Right lobe of liver (tissue), 6 donors: ENCODE measurements at regions of chr5 and their contacts with region 1.

Region 1: GRCh38 chr5:141040771-141041426 is 10.3 kb upstream of the PCDHB1 start:
- DNase-seq: peak; percentile 85 to 91 (median 89)
- ATAC-seq: peak; percentile 98 to 99 (median 99)
- H3K4me3 ChIP-seq: peak overlapping the region; percentile 0 to 36 (median 29)
- H3K27ac ChIP-seq: peak overlapping the region in 1 of 3 donors; percentile 12
- H3K4me1 ChIP-seq: no peaks in the 10 kb centered on the region
- H3K27me3 ChIP-seq: peaks cover 7 to 11% of the 10 kb centered on the region in 2 donors
- CTCF ChIP-seq: peak; percentile 62 to 83 (median 70)
- POLR2A ChIP-seq: peak; percentile 79

Region 2: DNA sequence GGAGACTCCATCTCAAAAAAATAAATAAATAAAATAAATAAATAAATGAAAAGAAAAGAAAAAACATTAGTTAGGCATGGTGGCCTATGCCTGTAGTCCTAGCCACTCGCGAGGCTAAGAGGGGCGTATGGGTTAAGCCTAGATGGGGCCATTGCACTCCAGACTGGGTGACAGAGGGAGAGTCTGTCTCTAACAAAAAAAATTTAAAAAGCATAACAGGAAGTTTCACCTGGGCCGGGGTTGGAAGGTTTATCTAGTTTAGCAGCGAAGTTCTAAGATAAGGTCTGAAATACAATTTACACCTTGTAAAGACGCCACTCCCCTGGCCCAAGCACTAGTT is 322.7 kb before region 1 on chr5:
- intact Hi-C with region 1: no loop called
- DNase-seq: no peak
- ATAC-seq: no peak
- H3K4me3 ChIP-seq: no peak overlapping the region
- H3K27ac ChIP-seq: no peak overlapping the region
- H3K4me1 ChIP-seq: no peaks in the 10 kb centered on the region
- H3K27me3 ChIP-seq: no peaks in the 10 kb centered on the region
- CTCF ChIP-seq: no peak
- POLR2A ChIP-seq: no peak

Region 3: GRCh38 chr5:140882591-140882899 is 158.4 kb before region 1 on chr5:
- intact Hi-C with region 1: loop called in 1 of 2 experiments (anchors 10 kb)
- DNase-seq: no peak
- ATAC-seq: peak in 2 of 4 donors; percentile 35 to 64
- H3K4me3 ChIP-seq: peak overlapping the region; percentile 6 to 34 (median 34)
- H3K27ac ChIP-seq: no peak overlapping the region
- H3K4me1 ChIP-seq: no peaks in the 10 kb centered on the region
- H3K27me3 ChIP-seq: peaks cover 0 to under 1% of the 10 kb centered on the region in 2 donors
- CTCF ChIP-seq: peak in 2 of 4 donors; percentile 10 to 29
- POLR2A ChIP-seq: no peak